ENCODE measurements at regions of chr1 and their contacts with region 1.

Region 1: DNA sequence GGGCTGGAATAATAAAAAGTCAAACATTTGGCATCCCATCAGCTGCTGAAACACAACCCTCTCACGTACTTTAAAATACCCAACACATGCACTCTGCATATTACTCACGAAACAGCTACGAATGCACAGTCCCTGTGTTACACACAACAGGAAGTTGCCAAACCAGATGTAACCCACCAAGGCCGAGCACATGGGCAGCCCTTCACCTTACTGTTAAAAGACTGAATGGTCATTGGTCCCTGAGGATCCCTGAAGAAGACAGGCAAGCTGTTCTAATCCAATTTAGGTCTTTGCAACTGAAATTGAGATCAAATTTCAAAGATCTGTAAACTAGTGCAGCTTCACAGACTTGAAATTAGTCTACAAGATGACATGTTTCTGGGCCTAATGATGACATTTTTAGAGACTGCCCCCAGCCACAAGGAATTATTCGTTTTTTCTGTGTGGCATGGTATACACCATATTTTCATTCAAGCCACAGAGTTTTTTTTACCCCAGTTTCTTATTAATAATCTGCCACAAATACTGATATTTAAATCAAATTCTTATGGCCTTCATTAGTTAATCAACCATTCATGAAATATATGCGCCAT is 25.6 kb upstream of the IER5 start:
- DNase-seq: peak; percentile 78
- H3K4me3 Mint-ChIP-seq: peak overlapping the region; percentile 76
- H3K27ac Mint-ChIP-seq: peak overlapping the region; percentile 86
- H3K4me1 Mint-ChIP-seq: peaks cover 20% of the 10 kb centered on the region
- H3K27me3 Mint-ChIP-seq: peaks cover 2% of the 10 kb centered on the region

Region 2: GRCh38 chr1:180849036-180849775 is 213.7 kb before region 1 on chr1:
- intact Hi-C with region 1: no loop called
- DNase-seq: no peak
- H3K4me3 Mint-ChIP-seq: no peak overlapping the region
- H3K27ac Mint-ChIP-seq: no peak overlapping the region
- H3K4me1 Mint-ChIP-seq: peaks cover 12% of the 10 kb centered on the region
- H3K27me3 Mint-ChIP-seq: no peaks in the 10 kb centered on the region

Region 3: DNA sequence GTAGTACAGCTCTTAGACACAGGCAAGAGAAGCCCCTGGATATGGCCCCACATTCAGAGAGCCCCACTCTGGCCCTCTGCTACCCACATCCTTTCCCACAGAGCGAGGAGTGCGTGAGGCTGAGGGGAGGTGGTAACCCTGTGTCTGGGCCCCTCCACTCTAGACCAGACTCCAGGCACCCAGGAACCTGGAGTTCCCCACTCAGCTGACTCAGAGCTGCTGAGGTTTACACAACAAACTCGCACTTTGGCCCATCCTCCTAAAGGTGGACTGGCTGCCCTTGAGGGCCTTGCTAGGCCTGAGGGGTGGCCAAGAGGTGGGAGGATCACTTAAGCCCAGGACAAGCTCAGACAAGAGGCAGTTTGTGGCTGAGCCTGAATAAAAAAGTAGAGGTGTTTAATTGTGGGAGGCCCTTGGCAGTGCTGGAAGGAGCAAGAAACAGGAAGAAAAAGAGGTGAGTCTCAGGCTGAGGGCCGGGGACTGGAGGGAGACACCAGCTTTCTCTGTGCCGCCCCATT is 18.4 kb before region 1 on chr1:
- intact Hi-C with region 1: loop called (anchors 2 kb)
- DNase-seq: peak; percentile 87
- H3K4me3 Mint-ChIP-seq: peak overlapping the region; percentile 48
- H3K27ac Mint-ChIP-seq: peak overlapping the region; percentile 89
- H3K4me1 Mint-ChIP-seq: peaks cover 40% of the 10 kb centered on the region
- H3K27me3 Mint-ChIP-seq: no peaks in the 10 kb centered on the region

Region 4: GRCh38 chr1:181356505-181357340 is 293.8 kb after region 1 on chr1:
- intact Hi-C with region 1: no loop called
- DNase-seq: no peak
- H3K4me3 Mint-ChIP-seq: no peak overlapping the region
- H3K27ac Mint-ChIP-seq: no peak overlapping the region
- H3K4me1 Mint-ChIP-seq: no peaks in the 10 kb centered on the region
- H3K27me3 Mint-ChIP-seq: peaks cover 10% of the 10 kb centered on the region